Mammary epithelial cell (primary cell): ENCODE measurements at regions of chr19 and their contacts with region 1.

Region 1: DNA sequence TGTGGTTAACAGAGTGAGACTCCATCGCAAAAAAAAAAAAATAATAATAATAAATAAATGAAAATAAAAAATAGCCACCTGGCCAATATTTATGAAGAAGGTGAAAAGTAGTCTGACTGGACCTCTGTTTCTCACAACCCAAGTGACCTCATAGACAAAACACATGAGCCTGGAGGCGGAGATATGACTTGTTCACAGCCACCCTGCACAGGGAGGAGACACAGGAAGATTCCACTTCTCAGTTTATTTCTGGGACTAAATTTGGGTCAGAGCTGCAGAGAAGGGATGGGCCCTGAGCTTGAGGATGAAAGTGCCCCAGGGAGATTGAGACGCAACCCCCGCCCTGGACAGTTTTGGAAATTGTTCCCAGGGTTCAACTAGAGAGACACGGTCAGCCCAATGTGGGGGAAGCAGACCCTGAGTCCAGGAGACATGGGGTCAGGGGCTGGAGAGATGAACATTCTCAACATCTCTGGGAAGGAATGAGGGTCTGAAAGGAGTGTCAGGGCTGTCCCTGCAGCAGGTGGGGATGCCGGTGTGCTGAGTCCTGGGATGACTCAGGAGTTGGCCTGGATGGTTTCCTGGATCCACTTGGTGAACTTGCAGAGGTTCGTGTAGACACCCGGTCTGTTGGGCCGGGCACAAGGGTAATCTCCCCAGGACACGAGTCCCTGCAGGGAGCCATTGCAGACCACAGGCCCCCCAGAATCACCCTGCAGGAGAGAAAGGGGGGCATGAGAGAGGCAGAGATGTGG is 9.6 kb downstream of the KLK5 start:
- DNase-seq: peak; percentile 47
- H3K4me3 ChIP-seq: no peak overlapping the region
- H3K27ac ChIP-seq: peak overlapping the region; percentile 56
- H3K4me1 ChIP-seq: peaks cover 14% of the 10 kb centered on the region
- H3K27me3 ChIP-seq: no peaks in the 10 kb centered on the region
- CTCF ChIP-seq: no peak

Region 2: DNA sequence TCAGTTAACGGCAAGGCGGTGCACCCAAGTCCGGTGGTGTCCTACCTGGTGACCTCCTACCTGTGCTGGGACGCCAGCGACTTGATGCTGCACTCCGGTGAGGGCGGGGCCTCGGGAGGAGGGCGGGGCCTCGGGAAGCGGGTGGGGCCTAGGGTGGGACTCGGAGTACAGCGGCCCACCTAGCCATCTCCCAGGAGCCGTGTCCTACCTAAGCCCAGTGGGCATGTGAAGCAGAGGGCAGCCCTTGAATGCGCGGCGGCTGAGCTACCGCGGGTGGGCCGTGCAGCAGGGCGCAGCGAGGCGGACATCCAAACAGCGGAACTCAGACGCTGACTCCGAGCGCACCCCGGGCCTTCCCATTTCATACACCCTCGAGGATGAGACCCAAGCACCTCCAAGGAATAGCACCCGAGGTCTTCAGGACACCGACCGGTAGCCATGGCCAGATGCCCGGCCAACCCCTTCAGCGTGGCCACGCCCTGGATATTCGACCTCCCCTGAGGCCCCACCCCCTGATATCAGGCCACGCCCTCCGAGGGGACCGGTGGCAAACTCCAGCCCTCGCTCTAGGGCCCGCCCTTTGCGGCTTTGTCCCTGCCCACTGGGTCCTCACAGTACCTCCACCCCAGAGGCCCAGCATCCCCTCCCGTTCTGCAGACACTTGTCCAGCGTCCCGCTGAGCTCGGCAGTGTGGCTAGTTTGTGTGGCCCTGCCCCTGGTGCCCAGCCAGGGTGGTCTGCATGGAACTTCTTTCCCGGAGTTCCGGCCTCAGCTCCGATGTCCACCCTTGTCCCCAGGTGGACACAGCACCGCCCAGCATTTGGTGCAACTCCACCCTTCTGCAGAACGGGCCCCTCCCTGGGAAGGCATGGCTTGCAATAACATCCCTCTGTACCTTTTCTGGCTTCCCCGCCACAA is 125.1 kb before region 1 on chr19:
- CTCF ChIA-PET with region 1: no interaction called
- dilution Hi-C with region 1: loop called (anchors 5 kb)
- in situ Hi-C with region 1: no loop called
- intact Hi-C with region 1: no loop called
- DNase-seq: no peak
- H3K4me3 ChIP-seq: peak overlapping the region; percentile 50 to 70 (median 68)
- H3K27ac ChIP-seq: no peak overlapping the region
- H3K4me1 ChIP-seq: peaks cover 17% of the 10 kb centered on the region
- H3K27me3 ChIP-seq: no peaks in the 10 kb centered on the region
- CTCF ChIP-seq: no peak

Region 3: DNA sequence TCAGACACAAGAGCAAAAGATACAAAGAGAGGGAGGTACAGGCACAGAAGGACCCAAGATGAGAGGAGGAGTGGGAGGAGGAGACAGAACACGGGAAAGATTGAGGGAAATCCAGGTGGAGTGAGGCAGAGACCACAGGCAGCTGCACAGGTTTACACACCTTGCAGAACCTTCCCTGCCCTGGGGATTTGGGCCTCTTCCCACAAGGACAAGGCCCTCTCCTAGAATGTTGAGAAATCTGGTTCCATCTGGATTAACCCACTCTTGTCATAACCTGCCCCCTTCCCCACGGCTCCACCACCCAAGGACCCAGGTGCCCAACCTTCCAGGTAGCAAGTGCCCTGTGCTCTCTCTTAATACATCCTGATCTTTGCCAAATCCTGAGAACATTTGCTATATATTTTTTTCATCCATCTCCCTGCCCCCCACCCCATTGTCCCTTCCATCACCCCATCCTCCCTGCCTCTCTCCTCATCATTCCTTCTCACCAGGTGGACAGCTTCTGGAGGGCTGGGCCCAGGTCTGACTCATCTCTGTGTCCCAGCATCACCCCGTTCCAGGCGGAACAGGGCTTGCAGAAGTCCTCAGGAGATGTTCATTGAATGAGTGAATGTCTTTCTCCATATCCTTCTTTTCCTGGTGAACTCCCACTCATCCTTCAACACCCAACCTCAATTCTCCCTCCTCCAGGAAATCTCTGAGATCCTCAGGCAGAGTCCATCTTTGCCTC is 67.0 kb after region 1 on chr19:
- CTCF ChIA-PET with region 1: no interaction called
- dilution Hi-C with region 1: loop called (anchors 5 kb)
- in situ Hi-C with region 1: no loop called
- intact Hi-C with region 1: no loop called
- DNase-seq: peak; percentile 92
- H3K4me3 ChIP-seq: no peak overlapping the region
- H3K27ac ChIP-seq: peak overlapping the region; percentile 86
- H3K4me1 ChIP-seq: peaks cover 42% of the 10 kb centered on the region
- H3K27me3 ChIP-seq: no peaks in the 10 kb centered on the region
- CTCF ChIP-seq: no peak